ENCODE measurements at regions of chr6 and their contacts with region 1.

Region 1: DNA sequence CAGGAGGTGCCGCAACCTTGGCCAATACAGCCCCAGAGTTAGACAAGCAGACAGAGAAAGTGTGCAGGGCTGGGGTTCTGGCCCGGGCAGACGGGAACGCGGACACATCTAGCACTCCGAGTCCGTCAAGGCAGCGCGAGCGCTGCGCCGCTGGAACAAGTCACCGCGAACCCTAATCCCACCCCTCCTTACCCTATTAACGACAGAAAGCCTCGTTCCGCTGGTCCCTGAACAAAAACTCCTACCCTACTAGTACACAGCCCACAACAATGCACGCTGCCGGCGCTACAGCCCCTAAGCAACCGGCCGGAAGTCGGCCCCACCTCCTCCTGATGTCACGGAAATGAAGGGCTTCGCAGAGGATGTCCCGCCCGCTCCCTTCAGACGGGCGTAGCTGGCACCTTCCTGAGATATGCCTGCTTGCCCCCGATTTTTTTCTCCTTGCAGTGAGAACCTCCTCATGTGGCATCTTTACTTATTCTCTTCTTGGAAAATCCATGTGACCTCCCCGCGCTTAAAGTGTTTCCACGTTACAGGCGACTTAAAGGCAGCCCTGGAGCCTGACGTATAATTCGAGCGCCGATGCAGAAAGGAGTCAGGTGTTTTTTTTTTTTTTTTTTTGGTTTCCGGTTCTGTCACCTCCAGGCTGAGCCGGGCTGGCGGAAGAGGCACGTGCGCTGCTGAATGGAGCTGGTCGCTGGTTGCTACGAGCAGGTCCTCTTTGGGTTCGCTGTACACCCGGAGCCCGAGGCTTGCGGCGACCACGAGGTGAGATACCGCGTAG is at the starts of genes C6orf52 and PAK1IP1:
- DNase-seq: peak; percentile 89 to 96 (median 95)
- H3K4me3 ChIP-seq: peak within 1 kb of the TSS; percentile 98
- H3K4me3 Mint-ChIP-seq: peak within 1 kb of the TSS; percentile 94 to 99 (median 97)
- H3K27ac ChIP-seq: peak within 1 kb of the TSS; percentile 99
- H3K27ac Mint-ChIP-seq: peak within 1 kb of the TSS; percentile 100
- H3K4me1 ChIP-seq: peaks cover 26% of the 10 kb centered on the region
- H3K4me1 Mint-ChIP-seq: peaks cover 35 to 48% (median 46%) of the 10 kb centered on the region in 3 donors
- H3K27me3 ChIP-seq: no peaks in the 10 kb centered on the region
- H3K27me3 Mint-ChIP-seq: peaks cover 0 to 4% of the 10 kb centered on the region in 2 donors
- total RNA-seq, gene C6orf52: 6.8 to 7.4 TPM
- total RNA-seq, gene PAK1IP1: 57.1 to 58.0 TPM

Region 2: DNA sequence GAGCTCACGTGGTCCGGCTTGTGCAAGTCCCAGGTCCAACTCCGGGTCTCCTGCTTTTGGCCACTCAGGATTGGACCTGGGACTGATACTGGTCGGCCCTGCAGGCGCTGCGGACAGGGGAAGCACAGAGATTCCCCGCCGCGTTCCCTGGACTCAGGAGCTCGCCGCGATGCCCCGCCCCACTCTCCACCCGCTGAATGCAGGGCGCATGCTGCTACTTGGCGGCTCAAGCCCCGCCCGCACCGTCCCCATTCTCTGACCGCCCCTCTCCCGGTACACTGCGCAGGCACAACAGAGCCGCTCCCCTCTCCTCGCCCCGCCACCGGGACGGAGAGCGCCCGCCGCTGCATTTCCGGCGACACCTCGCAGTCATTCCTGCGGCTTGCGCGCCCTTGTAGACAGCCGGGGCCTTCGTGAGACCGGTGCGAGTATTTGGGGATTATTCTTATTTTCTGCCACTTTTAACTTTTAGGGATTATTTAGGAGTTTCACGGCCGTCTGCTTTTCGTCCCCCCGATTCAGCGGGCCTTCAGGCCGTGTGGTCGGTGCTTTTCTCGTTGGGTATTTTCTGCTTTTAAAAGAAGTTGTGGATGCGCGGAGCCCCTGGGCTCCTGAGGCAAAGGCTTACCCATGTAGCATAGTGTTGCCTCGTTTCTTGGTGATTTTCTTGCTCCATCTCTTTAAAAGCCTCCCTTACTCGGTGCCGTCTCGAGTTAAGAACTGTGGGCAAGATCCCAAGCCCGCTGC is 28.5 kb after region 1 on chr6 and contains the start of gene TMEM14C:
- CTCF ChIA-PET with region 1: interaction called, 19 read pairs
- POLR2A ChIA-PET with region 1: interaction called, 26 read pairs
- DNase-seq: peak; percentile 63 to 81 (median 72)
- H3K4me3 ChIP-seq: peak within 1 kb of the TSS; percentile 83
- H3K4me3 Mint-ChIP-seq: peak within 1 kb of the TSS; percentile 85 to 97 (median 94)
- H3K27ac ChIP-seq: peak within 1 kb of the TSS; percentile 84
- H3K27ac Mint-ChIP-seq: peak within 1 kb of the TSS; percentile 81 to 98 (median 95)
- H3K4me1 ChIP-seq: peaks cover 35% of the 10 kb centered on the region
- H3K4me1 Mint-ChIP-seq: peaks cover 58 to 86% (median 80%) of the 10 kb centered on the region in 3 donors
- H3K27me3 ChIP-seq: no peaks in the 10 kb centered on the region
- H3K27me3 Mint-ChIP-seq: no peaks in the 10 kb centered on the region
- total RNA-seq, gene TMEM14C: 62.8 to 68.0 TPM

Region 3: DNA sequence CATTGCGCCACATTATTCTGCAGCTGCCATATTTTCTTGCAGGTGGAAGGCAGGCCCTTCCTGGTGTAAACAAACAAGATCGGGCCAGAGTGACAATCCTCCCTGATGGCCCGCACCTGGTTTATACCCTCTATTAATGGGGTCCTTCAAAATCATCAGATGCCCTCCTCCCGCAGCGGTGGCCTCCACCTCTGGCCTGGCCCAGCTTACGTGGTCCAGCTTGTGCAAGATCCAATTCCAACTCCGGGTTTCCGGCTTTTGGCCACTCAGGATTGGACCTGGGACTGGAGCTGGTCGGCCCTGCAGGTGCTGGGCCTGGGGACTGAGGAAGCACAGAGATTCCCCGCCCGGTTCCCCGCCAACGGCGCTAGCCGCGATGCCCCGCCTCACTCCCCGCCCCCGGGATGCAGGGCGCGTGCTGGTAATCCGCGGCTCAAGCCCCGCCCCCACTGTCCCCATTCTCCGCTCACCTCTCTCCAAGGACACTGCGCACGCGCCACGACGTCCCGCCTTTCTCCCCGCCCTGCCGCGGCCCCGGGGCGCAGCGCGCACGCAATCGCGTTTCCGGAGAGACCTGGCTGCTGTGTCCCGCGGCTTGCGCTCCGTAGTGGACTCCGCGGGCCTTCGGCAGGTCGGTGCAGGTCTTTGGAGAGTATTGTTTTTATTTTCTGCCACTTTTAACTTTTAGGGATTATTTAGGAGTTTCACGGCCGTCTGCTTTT is 52.9 kb after region 1 on chr6 and contains the start of gene TMEM14B:
- CTCF ChIA-PET with region 1: interaction called, 9 read pairs
- POLR2A ChIA-PET with region 1: interaction called, 18 read pairs
- DNase-seq: peak; percentile 98 to 100 (median 99)
- H3K4me3 ChIP-seq: peak within 1 kb of the TSS; percentile 92
- H3K4me3 Mint-ChIP-seq: peak within 1 kb of the TSS; percentile 92 to 98 (median 96)
- H3K27ac ChIP-seq: peak within 1 kb of the TSS; percentile 80
- H3K27ac Mint-ChIP-seq: peak within 1 kb of the TSS; percentile 91 to 99 (median 96)
- H3K4me1 ChIP-seq: peaks cover 41% of the 10 kb centered on the region
- H3K4me1 Mint-ChIP-seq: peaks cover 55 to 65% (median 62%) of the 10 kb centered on the region in 3 donors
- H3K27me3 ChIP-seq: no peaks in the 10 kb centered on the region
- H3K27me3 Mint-ChIP-seq: no peaks in the 10 kb centered on the region
- total RNA-seq, gene TMEM14B: 82.0 to 85.1 TPM

Region 4: GRCh38 chr6:10759312-10759839 is 64.9 kb after region 1 on chr6:
- CTCF ChIA-PET with region 1: interaction called, 10 read pairs
- POLR2A ChIA-PET with region 1: no interaction called
- DNase-seq: peak in 1 of 5 donors; percentile 12
- H3K4me3 ChIP-seq: no peak overlapping the region
- H3K4me3 Mint-ChIP-seq: no peak overlapping the region
- H3K27ac ChIP-seq: no peak overlapping the region
- H3K27ac Mint-ChIP-seq: peak overlapping the region in 4 of 8 donors; percentile 12 to 44 (median 40)
- H3K4me1 ChIP-seq: no peaks in the 10 kb centered on the region
- H3K4me1 Mint-ChIP-seq: peaks cover 25 to 28% (median 26%) of the 10 kb centered on the region in 3 donors
- H3K27me3 ChIP-seq: no peaks in the 10 kb centered on the region
- H3K27me3 Mint-ChIP-seq: no peaks in the 10 kb centered on the region

Measured in CD8-positive, alpha-beta memory T cell (primary cell).